ENCODE measurements at regions of chr17 and their contacts with region 1.

Region 1: GRCh38 chr17:78241277-78242023 is 10.0 kb downstream of the TMEM235 start:
- DNase-seq: peak in 1 of 2 experiments; percentile 49
- H3K4me3 ChIP-seq: no peak overlapping the region
- H3K27ac ChIP-seq: no peak overlapping the region
- H3K4me1 ChIP-seq: peaks cover 0 to 3% (median 0%) of the 10 kb centered on the region in 4 experiments; a peak in 2 of 7 replicates
- H3K27me3 ChIP-seq: no peaks in the 10 kb centered on the region
- CTCF ChIP-seq: no peak
- EP300 ChIP-seq: no peak
- POLR2A ChIP-seq: no peak
- RAD21 ChIP-seq: no peak

Region 2: DNA sequence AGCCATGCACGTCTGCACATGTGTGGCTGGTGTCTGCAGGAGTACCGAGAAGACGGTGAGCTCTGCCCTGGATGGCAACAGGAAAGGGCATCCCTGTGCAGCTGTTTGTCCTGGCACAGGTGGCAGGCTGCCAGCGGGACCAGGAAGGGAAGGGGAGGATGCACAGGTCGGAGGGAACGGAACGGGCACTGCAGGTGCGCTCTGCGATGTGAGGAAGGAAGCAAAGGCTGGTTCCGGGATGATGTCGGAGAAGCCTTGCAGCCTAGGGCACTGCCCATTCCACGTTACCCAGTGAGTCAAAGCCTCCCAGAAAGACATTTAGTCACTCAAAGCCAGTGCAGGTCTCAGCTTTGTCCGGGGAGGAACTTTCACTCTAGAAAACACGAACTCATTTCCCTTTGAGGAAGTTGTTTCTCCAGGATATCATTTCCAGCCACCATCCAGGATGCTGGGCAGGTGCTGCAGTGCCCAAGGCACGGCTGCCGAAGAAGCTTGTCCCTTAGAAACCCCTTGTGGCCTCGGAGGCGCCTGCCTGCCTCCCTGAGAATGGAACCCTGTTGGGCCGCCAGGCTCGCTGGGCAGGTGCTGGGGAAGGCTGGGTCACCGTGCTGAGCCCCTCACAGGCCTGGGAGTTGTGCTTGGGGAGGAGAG is 14.6 kb before region 1 on chr17:
- CTCF ChIA-PET with region 1: interaction called, 4 read pairs
- POLR2A ChIA-PET with region 1: interaction called, 16 read pairs
- DNase-seq: no peak
- H3K4me3 ChIP-seq: no peak overlapping the region
- H3K27ac ChIP-seq: no peak overlapping the region
- H3K4me1 ChIP-seq: peaks cover 0 to 6% (median 5%) of the 10 kb centered on the region in 4 experiments; a peak in 5 of 7 replicates
- H3K27me3 ChIP-seq: peaks cover 0 to 14% (median 12%) of the 10 kb centered on the region in 4 experiments; a peak in 6 of 7 replicates
- CTCF ChIP-seq: no peak
- EP300 ChIP-seq: no peak
- POLR2A ChIP-seq: no peak
- RAD21 ChIP-seq: no peak

Region 3: GRCh38 chr17:78263063-78263743 is 21.8 kb after region 1 on chr17:
- CTCF ChIA-PET with region 1: no interaction called
- POLR2A ChIA-PET with region 1: no interaction called
- DNase-seq: peak in 1 of 2 experiments; percentile 49
- H3K4me3 ChIP-seq: no peak overlapping the region
- H3K27ac ChIP-seq: no peak overlapping the region
- H3K4me1 ChIP-seq: peaks cover 0 to 29% (median 22%) of the 10 kb centered on the region in 4 experiments; a peak in 6 of 7 replicates
- H3K27me3 ChIP-seq: no peaks in the 10 kb centered on the region; a peak in 2 of 7 replicates
- CTCF ChIP-seq: no peak
- EP300 ChIP-seq: no peak
- POLR2A ChIP-seq: no peak
- RAD21 ChIP-seq: no peak

Region 4: GRCh38 chr17:78289802-78290363 is 48.4 kb after region 1 on chr17:
- CTCF ChIA-PET with region 1: no interaction called
- POLR2A ChIA-PET with region 1: no interaction called
- DNase-seq: peak; percentile 75 to 76
- H3K4me3 ChIP-seq: no peak overlapping the region
- H3K27ac ChIP-seq: no peak overlapping the region
- H3K4me1 ChIP-seq: no peaks in the 10 kb centered on the region; a peak in 2 of 7 replicates
- H3K27me3 ChIP-seq: no peaks in the 10 kb centered on the region
- CTCF ChIP-seq: peak; percentile 90 to 95 (median 92)
- EP300 ChIP-seq: 0 out of 3 replicates have a peak, but pooled peaks of 1 of the 2 experiments have one; percentile 20
- POLR2A ChIP-seq: no peak
- RAD21 ChIP-seq: peak; percentile 82 to 89

Measured in H1 (cell line).